ENCODE measurements at regions of chr9 and their contacts with region 1.

Region 1: DNA sequence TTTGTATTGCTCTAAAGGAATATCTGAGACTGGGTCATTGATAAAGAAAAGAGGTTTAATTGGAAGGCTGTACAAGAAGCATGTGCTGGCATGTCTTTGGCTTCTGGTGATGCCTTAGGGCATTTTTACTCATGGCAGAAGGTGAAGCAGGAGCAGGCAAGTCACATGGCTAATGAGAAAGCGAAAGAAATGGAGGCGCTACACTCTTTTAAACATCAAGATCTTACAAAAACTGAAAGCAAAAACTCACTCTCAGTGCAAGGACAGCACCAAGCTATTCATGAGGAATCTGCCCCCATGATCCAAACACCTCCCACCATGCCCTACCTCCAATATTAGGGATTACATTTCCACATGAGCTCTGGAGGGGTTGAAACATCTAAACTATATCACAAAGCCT is 1458.8 kb upstream of the ACO1 start:
- DNase-seq: no peak
- ATAC-seq: no peak
- H3K4me3 ChIP-seq: no peak overlapping the region
- H3K4me3 Mint-ChIP-seq: no peak overlapping the region
- H3K27ac ChIP-seq: no peak overlapping the region
- H3K27ac Mint-ChIP-seq: no peak overlapping the region
- H3K4me1 ChIP-seq: no peaks in the 10 kb centered on the region
- H3K4me1 Mint-ChIP-seq: no peaks in the 10 kb centered on the region
- H3K27me3 ChIP-seq: no peaks in the 10 kb centered on the region
- H3K27me3 Mint-ChIP-seq: no peaks in the 10 kb centered on the region
- CTCF ChIP-seq: no peak

Region 2: DNA sequence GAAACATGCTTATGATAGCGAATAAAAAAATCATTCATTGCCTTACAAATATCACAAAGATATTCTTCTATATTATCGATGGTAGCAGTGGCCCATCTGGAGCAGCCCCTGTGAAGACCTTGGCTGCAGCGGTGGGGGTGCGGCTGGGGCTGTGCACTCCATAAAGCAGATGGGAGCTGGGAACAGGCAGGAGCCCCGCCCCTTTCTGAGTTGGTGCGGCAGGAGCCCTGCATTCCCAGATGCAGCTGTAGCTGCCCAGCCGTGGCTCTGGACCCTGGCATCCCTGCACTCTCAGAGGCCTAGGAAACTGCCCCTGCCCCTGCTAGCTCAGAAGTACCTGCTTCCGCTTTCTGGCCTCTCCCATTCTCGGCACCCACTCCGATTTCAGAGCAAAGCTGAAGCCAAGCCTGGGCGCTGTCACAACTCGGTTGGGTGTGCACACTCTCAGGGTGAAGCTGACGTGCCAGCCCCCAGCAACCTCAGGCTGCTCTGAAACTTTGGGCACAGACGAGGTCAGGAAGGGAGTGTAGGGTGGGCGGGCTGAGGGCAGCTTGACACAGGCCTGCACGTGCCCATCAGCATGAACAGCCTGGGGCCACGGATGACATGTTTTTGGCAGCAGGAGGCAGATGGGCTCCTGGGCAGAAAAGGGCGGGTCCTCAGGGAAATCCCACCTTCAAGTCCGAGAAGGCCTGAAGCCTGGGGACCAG is 18.0 kb after region 1 on chr9:
- CTCF ChIA-PET with region 1: no interaction called
- POLR2A ChIA-PET with region 1: no interaction called
- intact Hi-C with region 1: loop called in 1 of 2 experiments (anchors 2 kb)
- DNase-seq: no peak
- ATAC-seq: no peak
- H3K4me3 ChIP-seq: no peak overlapping the region
- H3K4me3 Mint-ChIP-seq: no peak overlapping the region
- H3K27ac ChIP-seq: no peak overlapping the region
- H3K27ac Mint-ChIP-seq: no peak overlapping the region
- H3K4me1 ChIP-seq: no peaks in the 10 kb centered on the region
- H3K4me1 Mint-ChIP-seq: no peaks in the 10 kb centered on the region
- H3K27me3 ChIP-seq: no peaks in the 10 kb centered on the region
- H3K27me3 Mint-ChIP-seq: no peaks in the 10 kb centered on the region
- CTCF ChIP-seq: no peak